ENCODE measurements at regions of chr5 and their contacts with region 1.

Region 1: DNA sequence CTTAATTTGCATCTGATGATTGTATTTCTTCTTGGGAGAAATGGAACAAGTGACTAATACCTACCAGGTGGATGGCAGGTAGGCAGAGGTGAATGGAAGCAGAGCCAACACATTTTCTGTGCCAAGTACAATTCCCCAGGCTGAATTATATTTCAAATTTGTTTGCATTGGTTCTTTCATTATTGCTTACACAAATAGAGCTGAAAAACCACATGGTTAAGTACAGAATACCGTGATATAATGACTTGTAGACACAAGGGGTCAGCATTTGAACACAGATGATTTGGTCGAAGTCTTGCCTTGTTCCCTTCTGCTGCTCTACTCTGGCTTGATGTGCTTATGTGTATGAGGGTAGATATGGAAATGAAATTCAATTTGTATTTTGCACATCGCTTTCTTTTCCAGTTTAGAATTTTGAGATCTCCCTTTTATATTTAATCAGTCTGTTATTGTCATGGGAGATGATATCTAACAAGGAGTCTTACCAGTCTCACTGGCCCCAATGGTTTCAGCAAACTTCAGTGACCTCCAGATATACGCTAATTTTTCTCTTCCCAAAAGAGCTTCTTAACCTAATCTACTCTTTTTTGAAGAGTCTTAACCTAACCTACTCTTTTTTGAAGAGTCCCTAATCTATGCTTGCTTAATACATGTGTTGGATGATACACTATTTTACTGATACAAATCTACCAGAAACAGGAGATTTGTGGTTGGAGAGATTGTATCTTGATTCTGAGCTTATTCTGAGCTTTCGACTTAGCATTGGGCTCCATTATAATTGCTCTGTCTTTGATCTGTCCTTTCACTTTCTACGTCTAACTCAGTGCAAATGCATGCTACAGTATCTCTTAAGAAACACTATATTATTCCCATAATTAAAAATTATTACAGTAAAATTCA is 88.1 kb downstream of the PCSK1 start:
- DNase-seq: peak in 7 of 14 experiments; percentile 1 to 81 (median 26)
- ATAC-seq: peak; percentile 91
- H3K4me3 ChIP-seq: peak overlapping the region; percentile 3
- H3K4me3 Mint-ChIP-seq: peak overlapping the region; percentile 15
- H3K27ac ChIP-seq: no peak overlapping the region
- H3K27ac Mint-ChIP-seq: no peak overlapping the region
- H3K4me1 ChIP-seq: peaks cover 14% of the 10 kb centered on the region
- H3K4me1 Mint-ChIP-seq: peaks cover 17% of the 10 kb centered on the region
- H3K27me3 ChIP-seq: peaks cover 1 to 6% of the 10 kb centered on the region in 2 experiments
- H3K27me3 Mint-ChIP-seq: peaks cover 9% of the 10 kb centered on the region
- CTCF ChIP-seq: peak; percentile 73

Region 2: DNA sequence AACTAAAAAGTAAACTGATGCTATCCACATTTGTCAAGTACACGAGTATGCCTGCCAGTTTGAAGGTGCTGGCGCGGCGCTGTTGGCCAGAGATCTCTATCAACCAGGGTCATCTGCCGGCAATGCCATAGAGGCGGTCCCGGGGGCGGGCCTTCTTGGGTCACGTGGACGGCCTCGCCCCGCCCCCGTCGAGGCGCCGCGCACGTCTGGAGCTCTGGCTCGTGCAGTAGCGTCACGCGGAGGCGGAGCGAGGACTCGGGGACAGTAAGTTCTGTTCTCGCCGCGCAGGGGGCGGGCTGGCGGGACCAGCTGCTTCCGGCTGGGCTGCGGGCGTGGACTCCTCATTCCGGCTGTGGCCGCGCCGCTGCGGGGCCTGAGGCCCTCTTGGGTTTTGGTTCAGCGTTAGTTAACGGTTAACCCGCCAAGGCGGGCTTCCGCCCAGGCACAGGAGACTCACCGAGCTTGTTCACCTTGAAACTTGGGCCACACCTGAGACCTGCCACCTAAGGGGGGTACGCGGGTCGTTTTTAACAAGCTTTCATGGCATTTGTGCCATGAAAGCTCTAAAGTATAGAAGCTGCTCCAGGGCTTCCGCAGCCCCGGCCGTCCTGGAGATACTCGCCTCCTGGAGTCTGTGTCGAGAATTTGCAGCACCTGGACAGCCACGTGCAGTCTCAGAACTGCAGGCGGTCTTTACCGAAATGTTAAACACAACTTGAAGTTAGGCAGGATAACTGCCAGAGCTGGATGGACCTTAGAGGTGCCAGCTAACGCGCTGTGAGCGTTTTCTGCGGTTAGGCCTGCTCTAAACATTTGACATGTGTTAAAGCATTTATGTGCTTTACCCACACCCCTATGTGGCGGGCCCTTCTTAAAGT is 698.1 kb before region 1 on chr5 and contains the start of gene RFESD:
- CTCF ChIA-PET with region 1: no interaction called
- POLR2A ChIA-PET with region 1: no interaction called
- intact Hi-C with region 1: no loop called
- DNase-seq: peak; percentile 82 to 97 (median 90)
- ATAC-seq: peak; percentile 92
- H3K4me3 ChIP-seq: peak within 1 kb of the TSS; percentile 74
- H3K4me3 Mint-ChIP-seq: peak within 1 kb of the TSS; percentile 88
- H3K27ac ChIP-seq: peak within 1 kb of the TSS; percentile 71 to 74
- H3K27ac Mint-ChIP-seq: peak within 1 kb of the TSS; percentile 68
- H3K4me1 ChIP-seq: peaks cover 18% of the 10 kb centered on the region
- H3K4me1 Mint-ChIP-seq: peaks cover 51% of the 10 kb centered on the region
- H3K27me3 ChIP-seq: no peaks in the 10 kb centered on the region
- H3K27me3 Mint-ChIP-seq: no peaks in the 10 kb centered on the region
- CTCF ChIP-seq: no peak
- total RNA-seq, gene RFESD: 1.3 to 1.5 TPM

Region 3: DNA sequence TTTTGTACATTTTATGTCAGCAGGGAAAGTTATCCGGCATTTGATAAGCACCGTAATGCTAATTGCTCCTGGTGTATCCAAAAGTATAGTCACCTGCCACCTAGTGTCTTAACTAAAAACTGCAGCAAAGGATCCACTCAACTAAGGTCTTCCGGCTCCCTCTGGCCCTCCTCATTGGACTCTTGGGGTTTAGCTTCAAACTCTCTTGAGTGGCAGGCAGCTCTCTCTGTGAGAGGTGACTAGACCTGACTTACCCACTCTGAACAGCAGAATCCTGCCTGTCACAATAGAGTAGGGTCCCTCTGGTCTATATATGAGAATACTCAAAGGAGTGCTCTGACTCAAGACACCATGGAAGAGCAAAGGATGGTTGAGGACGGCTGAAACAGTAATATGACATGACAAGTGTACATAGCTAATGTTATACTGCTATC is 256.9 kb after region 1 on chr5:
- CTCF ChIA-PET with region 1: interaction called, 40 read pairs
- POLR2A ChIA-PET with region 1: interaction called, 14 read pairs
- intact Hi-C with region 1: loop called (anchors 1 kb)
- DNase-seq: peak in 13 of 14 experiments; percentile 8 to 83 (median 27)
- ATAC-seq: peak; percentile 87
- H3K4me3 ChIP-seq: no peak overlapping the region
- H3K4me3 Mint-ChIP-seq: no peak overlapping the region
- H3K27ac ChIP-seq: no peak overlapping the region
- H3K27ac Mint-ChIP-seq: no peak overlapping the region
- H3K4me1 ChIP-seq: peaks cover 3% of the 10 kb centered on the region
- H3K4me1 Mint-ChIP-seq: no peaks in the 10 kb centered on the region
- H3K27me3 ChIP-seq: peaks cover 0 to 5% of the 10 kb centered on the region in 2 experiments
- H3K27me3 Mint-ChIP-seq: peaks cover 18% of the 10 kb centered on the region
- CTCF ChIP-seq: peak; percentile 81

Region 4: DNA sequence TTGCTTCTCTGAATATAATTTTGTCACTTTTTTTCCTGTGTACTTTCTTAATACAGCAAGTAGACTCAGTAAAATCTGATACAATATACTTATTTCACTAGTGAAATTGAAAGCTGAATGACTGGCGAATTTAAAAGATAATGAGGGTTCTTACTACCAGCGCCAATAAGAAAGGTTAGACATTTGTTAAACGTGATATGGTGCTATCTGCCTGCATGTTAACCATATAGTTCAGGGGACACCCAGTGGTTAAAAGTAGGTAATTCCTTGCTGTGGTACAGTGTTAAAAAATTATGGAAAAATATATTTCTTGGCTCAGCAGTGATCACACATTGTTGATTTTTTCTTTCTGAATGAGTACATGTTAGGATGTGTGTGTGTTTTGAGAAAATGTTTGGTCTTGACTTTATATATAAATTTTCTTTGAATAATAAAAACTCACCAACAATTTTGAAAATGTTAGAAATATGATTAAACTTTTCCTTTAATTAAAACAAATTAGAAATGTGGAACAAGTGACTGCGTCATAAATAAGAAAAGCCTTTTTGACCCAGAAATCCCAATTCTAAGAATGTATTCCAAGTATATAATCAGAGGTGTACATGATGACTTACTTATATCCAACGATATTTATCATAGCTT is 343.0 kb after region 1 on chr5:
- CTCF ChIA-PET with region 1: interaction called, 4 read pairs
- POLR2A ChIA-PET with region 1: no interaction called
- intact Hi-C with region 1: loop called in 1 of 2 experiments (anchors 5 kb)
- DNase-seq: peak in 3 of 14 experiments; percentile 44 to 59 (median 59)
- ATAC-seq: peak; percentile 99
- H3K4me3 ChIP-seq: no peak overlapping the region
- H3K4me3 Mint-ChIP-seq: peak overlapping the region; percentile 48
- H3K27ac ChIP-seq: no peak overlapping the region
- H3K27ac Mint-ChIP-seq: no peak overlapping the region
- H3K4me1 ChIP-seq: peaks cover 3% of the 10 kb centered on the region
- H3K4me1 Mint-ChIP-seq: peaks cover 30% of the 10 kb centered on the region
- H3K27me3 ChIP-seq: no peaks in the 10 kb centered on the region
- H3K27me3 Mint-ChIP-seq: no peaks in the 10 kb centered on the region
- CTCF ChIP-seq: peak; percentile 68

Region 5: GRCh38 chr5:96729156-96729555 is 384.2 kb after region 1 on chr5:
- CTCF ChIA-PET with region 1: no interaction called
- POLR2A ChIA-PET with region 1: no interaction called
- intact Hi-C with region 1: loop called in 1 of 2 experiments (anchors 10 kb)
- DNase-seq: no peak
- ATAC-seq: no peak
- H3K4me3 ChIP-seq: no peak overlapping the region
- H3K4me3 Mint-ChIP-seq: no peak overlapping the region
- H3K27ac ChIP-seq: no peak overlapping the region
- H3K27ac Mint-ChIP-seq: no peak overlapping the region
- H3K4me1 ChIP-seq: no peaks in the 10 kb centered on the region
- H3K4me1 Mint-ChIP-seq: peaks cover 4% of the 10 kb centered on the region
- H3K27me3 ChIP-seq: no peaks in the 10 kb centered on the region
- H3K27me3 Mint-ChIP-seq: no peaks in the 10 kb centered on the region
- CTCF ChIP-seq: peak; percentile 25

Region 6: DNA sequence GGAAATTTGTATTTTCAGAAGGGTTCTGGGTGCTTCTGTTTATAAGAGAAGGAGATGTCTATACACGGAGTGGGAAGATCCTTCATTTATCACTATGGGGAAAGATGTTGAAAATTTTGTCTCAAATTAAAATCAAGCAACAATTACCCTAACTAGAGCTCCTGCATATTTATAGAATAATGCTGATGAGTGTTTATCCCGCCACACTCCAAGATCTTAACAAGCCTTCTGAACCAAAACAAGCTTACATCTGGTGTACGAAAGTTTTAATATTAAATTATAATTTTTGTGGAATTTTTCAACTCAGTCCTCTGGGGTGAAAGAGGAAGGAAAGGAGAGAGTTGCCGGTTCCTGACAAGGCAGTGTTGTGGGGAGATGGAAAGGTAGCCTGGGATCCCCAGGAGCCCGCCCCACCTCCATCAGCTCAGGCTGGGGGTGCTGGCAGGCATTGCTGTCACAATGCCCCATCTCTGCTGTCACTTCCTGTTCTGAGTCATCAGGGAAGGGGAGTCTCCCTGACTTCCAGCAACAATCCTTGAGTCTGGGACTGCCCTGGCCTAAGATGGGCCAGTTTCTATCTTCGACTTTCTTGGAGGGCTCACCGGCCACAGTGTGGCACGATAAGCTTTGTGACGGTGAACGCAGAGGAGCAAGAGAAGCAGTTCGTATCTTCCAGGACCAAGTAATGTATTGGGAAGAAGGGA is 398.3 kb after region 1 on chr5:
- CTCF ChIA-PET with region 1: no interaction called
- POLR2A ChIA-PET with region 1: no interaction called
- intact Hi-C with region 1: loop called in 1 of 2 experiments (anchors 10 kb)
- DNase-seq: peak in 2 of 14 experiments; percentile 29 to 36
- ATAC-seq: no peak
- H3K4me3 ChIP-seq: no peak overlapping the region
- H3K4me3 Mint-ChIP-seq: no peak overlapping the region
- H3K27ac ChIP-seq: no peak overlapping the region
- H3K27ac Mint-ChIP-seq: no peak overlapping the region
- H3K4me1 ChIP-seq: no peaks in the 10 kb centered on the region
- H3K4me1 Mint-ChIP-seq: no peaks in the 10 kb centered on the region
- H3K27me3 ChIP-seq: no peaks in the 10 kb centered on the region
- H3K27me3 Mint-ChIP-seq: no peaks in the 10 kb centered on the region
- CTCF ChIP-seq: no peak

Region 7: GRCh38 chr5:97162045-97162444 is 817.1 kb after region 1 on chr5:
- CTCF ChIA-PET with region 1: no interaction called
- POLR2A ChIA-PET with region 1: no interaction called
- intact Hi-C with region 1: loop called in 1 of 2 experiments (anchors 10 kb)
- DNase-seq: peak in 12 of 14 experiments; percentile 16 to 82 (median 34)
- ATAC-seq: peak; percentile 49
- H3K4me3 ChIP-seq: no peak overlapping the region
- H3K4me3 Mint-ChIP-seq: no peak overlapping the region
- H3K27ac ChIP-seq: no peak overlapping the region
- H3K27ac Mint-ChIP-seq: no peak overlapping the region
- H3K4me1 ChIP-seq: no peaks in the 10 kb centered on the region
- H3K4me1 Mint-ChIP-seq: peaks cover 14% of the 10 kb centered on the region
- H3K27me3 ChIP-seq: no peaks in the 10 kb centered on the region
- H3K27me3 Mint-ChIP-seq: no peaks in the 10 kb centered on the region
- CTCF ChIP-seq: peak; percentile 98